PC-3 (cell line): ENCODE measurements at regions of chr14 and their contacts with region 1.

Region 1: GRCh38 chr14:68297876-68298469 is 478.4 kb downstream of the RAD51B start:
- DNase-seq: peak; percentile 32
- ATAC-seq: peak; percentile 64
- H3K4me3 ChIP-seq: no peak overlapping the region
- H3K27ac ChIP-seq: no peak overlapping the region
- H3K4me1 ChIP-seq: no peaks in the 10 kb centered on the region
- H3K27me3 ChIP-seq: no peaks in the 10 kb centered on the region
- CTCF ChIP-seq: peak; percentile 58

Region 2: GRCh38 chr14:68268197-68268596 is 29.8 kb before region 1 on chr14:
- CTCF ChIA-PET with region 1: no interaction called
- POLR2A ChIA-PET with region 1: interaction called, 13 read pairs
- intact Hi-C with region 1: no loop called
- DNase-seq: no peak
- ATAC-seq: no peak
- H3K4me3 ChIP-seq: no peak overlapping the region
- H3K27ac ChIP-seq: no peak overlapping the region
- H3K4me1 ChIP-seq: no peaks in the 10 kb centered on the region
- H3K27me3 ChIP-seq: no peaks in the 10 kb centered on the region
- CTCF ChIP-seq: no peak